Activated CD4-positive, alpha-beta T cell treated with anti-CD3 and anti-CD28 coated beads for 36 hours (primary cell): ENCODE measurements at regions of chrX and their contacts with region 1.

Region 1: DNA sequence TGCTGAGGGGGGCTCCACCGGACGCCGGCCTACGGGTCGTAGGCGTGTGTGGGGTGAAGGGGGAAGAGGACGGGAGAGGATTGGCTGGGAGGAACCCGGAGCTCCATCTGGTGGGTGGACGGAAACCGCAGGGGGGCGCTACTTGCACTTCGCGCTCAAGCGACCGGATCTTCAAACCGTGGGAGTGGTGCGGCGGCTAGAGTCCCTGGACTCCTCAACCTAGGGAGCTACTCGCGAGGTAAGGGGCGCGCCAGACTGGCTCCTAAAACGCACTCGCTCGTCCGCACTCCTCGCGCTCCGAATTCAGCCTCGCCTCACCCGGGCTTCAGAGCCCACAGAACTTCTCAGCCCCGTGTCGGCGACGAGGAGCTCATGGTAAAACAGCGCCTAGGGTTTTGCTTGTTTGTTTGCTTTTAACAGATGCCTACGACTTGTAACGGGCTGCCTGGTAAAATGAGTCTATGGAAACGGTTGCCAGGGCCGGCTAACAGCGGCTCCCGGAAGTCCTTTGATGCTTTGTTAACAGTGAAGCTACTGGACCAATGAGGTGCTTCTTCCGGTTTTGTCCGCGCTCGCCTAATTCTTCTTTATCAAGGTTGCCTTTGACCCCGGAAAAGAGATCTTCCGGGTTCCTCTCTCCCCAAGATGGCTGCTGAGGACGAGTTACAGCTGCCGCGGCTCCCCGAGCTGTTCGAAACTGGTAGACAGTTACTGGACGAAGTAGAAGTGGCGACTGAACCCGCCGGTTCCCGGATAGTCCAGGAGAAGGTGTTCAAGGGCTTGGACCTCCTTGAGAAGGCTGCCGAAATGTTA is at the start of gene IGBP1:
- DNase-seq: peak; percentile 83
- ATAC-seq: peak; percentile 85
- H3K4me3 Mint-ChIP-seq: peak within 1 kb of the TSS; percentile 99
- H3K27ac Mint-ChIP-seq: peak within 1 kb of the TSS; percentile 97
- H3K4me1 Mint-ChIP-seq: peaks cover 28% of the 10 kb centered on the region
- H3K27me3 Mint-ChIP-seq: no peaks in the 10 kb centered on the region
- total RNA-seq, gene IGBP1: 44.4 to 46.3 TPM

Region 2: DNA sequence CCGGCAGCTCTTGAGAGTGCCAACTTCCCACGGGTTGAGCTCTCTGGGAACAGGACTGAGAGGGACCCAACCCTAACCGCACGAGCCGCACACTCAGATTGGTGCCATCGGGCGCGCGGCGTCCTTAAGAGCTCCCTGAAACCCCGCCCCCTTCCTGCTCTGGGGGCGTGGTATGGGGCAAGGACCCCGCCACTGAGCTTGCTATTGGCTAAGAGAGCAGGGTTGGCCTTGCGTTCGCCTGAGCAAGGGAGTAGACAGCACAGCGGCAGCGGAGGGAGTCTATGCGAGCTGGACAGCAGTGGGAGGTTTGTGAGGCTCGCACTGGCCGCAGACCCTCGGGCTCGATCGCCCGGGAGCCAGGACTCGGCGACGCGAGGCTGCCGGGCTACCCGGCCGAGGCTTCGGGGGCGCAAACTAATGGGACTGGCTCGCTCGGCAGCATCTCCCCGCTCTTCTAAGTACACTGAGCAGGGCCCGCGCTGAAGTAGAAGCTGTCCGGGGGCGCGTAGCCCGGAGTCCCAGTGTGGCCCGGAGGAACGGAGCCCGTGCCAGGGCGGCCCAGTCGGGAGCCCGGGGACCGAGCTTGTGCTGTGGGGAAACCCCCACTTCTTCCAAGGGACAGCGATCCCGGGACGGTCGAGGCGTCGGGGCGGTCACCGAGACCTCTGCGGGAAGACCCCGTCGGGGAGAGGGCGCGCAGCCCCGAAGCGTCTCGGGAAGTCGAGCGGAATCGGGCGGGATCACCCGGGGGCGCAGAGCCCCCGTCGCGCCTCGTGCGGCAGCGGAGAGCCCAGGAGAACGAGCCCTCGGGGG is 1304.6 kb before region 1 on chrX and contains the start of gene EFNB1:
- CTCF ChIA-PET with region 1: interaction called, 3 read pairs
- POLR2A ChIA-PET with region 1: no interaction called
- intact Hi-C with region 1: loop called in 1 of 2 experiments (anchors 5 kb)
- DNase-seq: peak; percentile 90
- ATAC-seq: peak; percentile 86
- H3K4me3 Mint-ChIP-seq: peak within 1 kb of the TSS; percentile 79
- H3K27ac Mint-ChIP-seq: peak within 1 kb of the TSS; percentile 76
- H3K4me1 Mint-ChIP-seq: peaks cover 20% of the 10 kb centered on the region
- H3K27me3 Mint-ChIP-seq: no peaks in the 10 kb centered on the region
- total RNA-seq, gene EFNB1: 3.8 to 3.9 TPM

Region 3: GRCh38 chrX:69615779-69616456 is 517.6 kb before region 1 on chrX and contains the start of gene EDA:
- CTCF ChIA-PET with region 1: no interaction called
- POLR2A ChIA-PET with region 1: no interaction called
- intact Hi-C with region 1: loop called in 1 of 2 experiments (anchors 5 kb)
- DNase-seq: peak; percentile 77
- ATAC-seq: peak; percentile 99
- H3K4me3 Mint-ChIP-seq: peak within 1 kb of the TSS; percentile 72
- H3K27ac Mint-ChIP-seq: no peak within 1 kb of the TSS
- H3K4me1 Mint-ChIP-seq: peaks cover 2% of the 10 kb centered on the region
- H3K27me3 Mint-ChIP-seq: peaks cover 18% of the 10 kb centered on the region
- total RNA-seq, gene EDA: 0.73 to 1.1 TPM

Region 4: GRCh38 chrX:70117713-70118112 is 15.8 kb before region 1 on chrX:
- CTCF ChIA-PET with region 1: no interaction called
- POLR2A ChIA-PET with region 1: no interaction called
- intact Hi-C with region 1: no loop called
- DNase-seq: no peak
- ATAC-seq: no peak
- H3K4me3 Mint-ChIP-seq: no peak overlapping the region
- H3K27ac Mint-ChIP-seq: no peak overlapping the region
- H3K4me1 Mint-ChIP-seq: no peaks in the 10 kb centered on the region
- H3K27me3 Mint-ChIP-seq: no peaks in the 10 kb centered on the region

Region 5: DNA sequence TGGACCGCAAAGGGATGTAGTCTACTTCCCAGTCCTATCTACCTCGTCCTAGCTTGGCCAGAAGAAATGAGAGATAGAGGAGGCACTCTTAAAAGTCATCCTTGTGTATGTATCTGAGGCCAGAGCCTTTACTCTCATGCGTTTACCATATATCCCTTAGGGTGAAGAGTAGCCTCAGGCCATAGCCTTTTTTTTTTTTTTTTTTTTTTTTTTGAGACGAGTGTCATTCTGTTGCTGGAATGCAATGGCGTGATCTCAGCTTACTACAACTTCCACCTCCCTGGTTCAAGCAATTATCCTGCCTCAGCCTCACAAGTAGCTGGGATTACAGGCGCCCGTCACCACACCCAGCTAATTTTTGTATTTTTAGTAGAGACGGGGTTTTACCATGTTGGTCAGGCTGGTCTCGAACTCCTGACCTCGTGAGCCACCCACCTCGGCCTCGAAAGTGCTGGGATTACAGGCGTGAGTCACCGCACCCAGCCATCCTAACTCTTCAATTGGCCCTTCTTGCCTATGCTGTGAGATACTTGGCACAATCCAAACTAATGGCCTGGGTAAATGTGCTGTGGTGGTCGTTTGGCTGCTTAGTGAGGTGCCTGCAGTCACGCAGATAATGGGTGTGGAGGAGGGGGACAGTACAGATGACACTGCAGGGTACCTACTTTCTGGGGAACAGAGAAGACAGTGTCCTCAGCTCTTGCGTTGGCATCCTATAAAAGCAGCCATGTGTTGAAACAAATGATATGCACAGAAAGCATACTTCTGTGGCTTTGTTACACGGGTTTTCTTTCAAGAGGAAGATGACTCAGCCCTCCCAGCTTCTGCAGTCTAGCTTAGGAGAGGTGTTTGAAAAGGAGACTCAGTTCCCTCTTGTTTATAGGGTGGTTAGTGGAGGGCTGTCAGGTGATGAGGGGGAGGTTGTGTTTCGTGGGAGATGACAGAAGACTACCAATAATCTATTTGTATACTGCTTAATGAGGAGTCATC is 33.4 kb after region 1 on chrX:
- CTCF ChIA-PET with region 1: interaction called, 4 read pairs
- POLR2A ChIA-PET with region 1: no interaction called
- intact Hi-C with region 1: loop called in 1 of 2 experiments (anchors 1 kb)
- DNase-seq: peak; percentile 55
- ATAC-seq: peak; percentile 98
- H3K4me3 Mint-ChIP-seq: no peak overlapping the region
- H3K27ac Mint-ChIP-seq: peak overlapping the region; percentile 85
- H3K4me1 Mint-ChIP-seq: peaks cover 14% of the 10 kb centered on the region
- H3K27me3 Mint-ChIP-seq: no peaks in the 10 kb centered on the region

Region 6: DNA sequence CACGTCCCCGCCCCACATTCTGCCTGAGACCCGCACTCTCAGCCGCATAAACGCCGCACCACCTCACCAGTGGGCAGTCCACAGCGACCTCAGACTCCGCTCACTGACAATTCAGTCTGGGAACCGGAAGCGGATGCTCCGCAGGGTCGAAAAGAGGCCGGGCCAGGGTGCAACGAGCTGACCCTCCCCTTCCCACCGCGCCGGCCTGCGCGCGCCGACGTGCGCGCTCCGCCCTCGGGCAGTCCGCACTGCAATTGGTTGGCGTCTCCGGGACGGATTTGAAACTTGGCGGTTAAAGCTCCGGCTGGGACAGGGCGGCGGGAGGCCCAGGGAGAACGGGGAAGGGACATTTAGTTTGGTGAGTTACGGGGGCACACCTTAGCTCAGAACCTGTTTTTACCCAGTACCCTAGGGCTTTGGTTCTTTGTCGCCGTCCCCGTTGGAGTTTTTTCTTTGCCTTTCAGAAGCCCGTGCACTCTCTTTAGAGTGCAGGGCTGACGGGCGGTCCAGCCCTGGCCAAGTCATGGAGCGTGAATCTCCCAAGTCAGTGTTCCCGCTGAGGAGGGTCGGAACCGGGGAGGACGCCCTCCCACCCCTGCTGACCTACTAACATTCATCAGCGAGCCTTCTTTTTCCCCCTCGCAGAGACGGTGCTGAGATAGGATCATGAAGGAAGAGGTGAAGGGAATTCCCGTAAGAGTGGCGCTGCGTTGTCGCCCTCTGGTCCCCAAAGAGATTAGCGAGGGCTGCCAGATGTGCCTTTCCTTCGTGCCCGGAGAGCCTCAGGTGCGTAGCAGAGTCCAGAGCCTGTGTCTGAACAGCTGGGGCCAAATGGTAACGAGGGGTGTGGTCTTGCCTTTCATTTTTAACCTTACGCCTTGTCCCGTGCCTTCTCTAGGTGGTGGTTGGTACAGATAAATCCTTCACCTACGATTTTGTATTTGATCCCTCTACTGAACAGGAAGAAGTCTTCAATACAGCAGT is 156.6 kb after region 1 on chrX and contains the starts of genes KIF4A and PDZD11:
- CTCF ChIA-PET with region 1: no interaction called
- POLR2A ChIA-PET with region 1: no interaction called
- intact Hi-C with region 1: loop called in 1 of 2 experiments (anchors 1 kb)
- DNase-seq: peak; percentile 89
- ATAC-seq: peak; percentile 100
- H3K4me3 Mint-ChIP-seq: peak within 1 kb of the TSS; percentile 88
- H3K27ac Mint-ChIP-seq: peak within 1 kb of the TSS; percentile 82
- H3K4me1 Mint-ChIP-seq: peaks cover 18% of the 10 kb centered on the region
- H3K27me3 Mint-ChIP-seq: no peaks in the 10 kb centered on the region
- total RNA-seq, gene KIF4A: 21.2 to 25.4 TPM
- total RNA-seq, gene PDZD11: 23.6 to 28.0 TPM

Region 7: DNA sequence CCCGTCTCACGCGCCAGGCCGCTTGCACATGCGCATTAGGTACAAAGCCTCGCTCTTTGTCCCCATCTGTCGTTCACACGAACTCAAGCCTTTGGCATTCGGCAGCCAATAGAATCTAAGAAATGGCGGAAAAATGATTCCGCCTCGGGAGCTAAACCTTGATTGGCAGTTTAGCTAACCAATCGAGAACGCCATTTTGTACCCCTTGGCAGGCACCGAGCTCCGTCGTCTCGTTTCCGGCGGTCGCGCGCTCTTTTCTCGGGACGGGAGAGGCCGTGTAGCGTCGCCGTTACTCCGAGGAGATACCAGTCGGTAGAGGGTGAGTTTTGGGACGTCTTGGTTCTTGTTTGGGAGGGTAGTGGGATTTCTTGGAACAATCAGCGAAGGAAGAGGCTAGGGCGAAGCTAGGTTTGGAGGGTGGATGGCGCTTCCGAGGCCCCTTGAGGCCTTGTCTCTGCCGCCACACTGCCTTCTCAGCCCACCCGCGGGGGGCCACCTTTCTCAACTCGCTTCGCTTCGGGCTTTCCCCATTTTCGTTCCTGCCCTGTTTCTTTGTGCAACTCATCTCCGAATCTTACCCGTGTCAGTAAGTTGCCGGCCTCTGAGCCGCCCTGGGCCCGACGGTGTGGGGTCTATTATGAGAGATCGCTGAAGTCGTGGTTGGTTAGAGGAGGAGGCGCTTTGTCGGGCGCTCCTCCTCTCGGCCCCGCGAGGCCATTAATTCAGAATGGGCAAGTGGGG is 1150.1 kb after region 1 on chrX and contains the start of gene NONO:
- CTCF ChIA-PET with region 1: no interaction called
- POLR2A ChIA-PET with region 1: no interaction called
- intact Hi-C with region 1: loop called in 1 of 2 experiments (anchors 5 kb)
- DNase-seq: peak; percentile 90
- ATAC-seq: peak; percentile 80
- H3K4me3 Mint-ChIP-seq: peak within 1 kb of the TSS; percentile 92
- H3K27ac Mint-ChIP-seq: peak within 1 kb of the TSS; percentile 98
- H3K4me1 Mint-ChIP-seq: peaks cover 9% of the 10 kb centered on the region
- H3K27me3 Mint-ChIP-seq: no peaks in the 10 kb centered on the region
- total RNA-seq, gene NONO: 508 to 1,161 TPM